ENCODE measurements at regions of chr3 and their contacts with region 1.

Region 1: GRCh38 chr3:194472290-194472920 is 14.4 kb downstream of the ATP13A3 start:
- DNase-seq: no peak
- H3K4me3 ChIP-seq: no peak overlapping the region
- H3K27ac ChIP-seq: no peak overlapping the region
- H3K4me1 ChIP-seq: peaks cover 0 to 5% (median 1%) of the 10 kb centered on the region in 4 experiments; a peak in 3 of 7 replicates
- H3K27me3 ChIP-seq: no peaks in the 10 kb centered on the region
- CTCF ChIP-seq: peak in 2 of 3 experiments; percentile 65 to 89; a peak in 2 of 4 replicates
- EP300 ChIP-seq: no peak
- POLR2A ChIP-seq: no peak
- RAD21 ChIP-seq: peak; percentile 84 to 85

Region 2: GRCh38 chr3:194447161-194447560 is 25.2 kb before region 1 on chr3:
- CTCF ChIA-PET with region 1: interaction called, 13 read pairs
- POLR2A ChIA-PET with region 1: no interaction called
- DNase-seq: no peak
- H3K4me3 ChIP-seq: no peak overlapping the region
- H3K27ac ChIP-seq: no peak overlapping the region
- H3K4me1 ChIP-seq: no peaks in the 10 kb centered on the region
- H3K27me3 ChIP-seq: peaks cover 0 to 2% (median 0%) of the 10 kb centered on the region in 4 experiments; a peak in 1 of 7 replicates
- CTCF ChIP-seq: no peak
- EP300 ChIP-seq: no peak
- POLR2A ChIP-seq: no peak
- RAD21 ChIP-seq: no peak

Region 3: GRCh38 chr3:194486540-194487288 is 14.3 kb after region 1 on chr3 and contains the start of gene ATP13A3:
- CTCF ChIA-PET with region 1: interaction called, 50 read pairs
- POLR2A ChIA-PET with region 1: interaction called, 11 read pairs
- DNase-seq: peak; percentile 70 to 79
- H3K4me3 ChIP-seq: peak within 1 kb of the TSS; percentile 75 to 92 (median 84)
- H3K27ac ChIP-seq: no peak within 1 kb of the TSS; the same call in 1 of the 2 replicates
- H3K4me1 ChIP-seq: peaks cover 0 to 2% (median 0%) of the 10 kb centered on the region in 4 experiments; a peak in 2 of 7 replicates
- H3K27me3 ChIP-seq: peaks cover 0 to 6% (median 4%) of the 10 kb centered on the region in 4 experiments; a peak in 1 of 7 replicates
- CTCF ChIP-seq: no peak
- EP300 ChIP-seq: no peak
- POLR2A ChIP-seq: peak; percentile 86 to 88
- RAD21 ChIP-seq: no peak
- total RNA-seq, gene ATP13A3: 84.2 and 92.2 TPM in 2 replicates

Region 4: DNA sequence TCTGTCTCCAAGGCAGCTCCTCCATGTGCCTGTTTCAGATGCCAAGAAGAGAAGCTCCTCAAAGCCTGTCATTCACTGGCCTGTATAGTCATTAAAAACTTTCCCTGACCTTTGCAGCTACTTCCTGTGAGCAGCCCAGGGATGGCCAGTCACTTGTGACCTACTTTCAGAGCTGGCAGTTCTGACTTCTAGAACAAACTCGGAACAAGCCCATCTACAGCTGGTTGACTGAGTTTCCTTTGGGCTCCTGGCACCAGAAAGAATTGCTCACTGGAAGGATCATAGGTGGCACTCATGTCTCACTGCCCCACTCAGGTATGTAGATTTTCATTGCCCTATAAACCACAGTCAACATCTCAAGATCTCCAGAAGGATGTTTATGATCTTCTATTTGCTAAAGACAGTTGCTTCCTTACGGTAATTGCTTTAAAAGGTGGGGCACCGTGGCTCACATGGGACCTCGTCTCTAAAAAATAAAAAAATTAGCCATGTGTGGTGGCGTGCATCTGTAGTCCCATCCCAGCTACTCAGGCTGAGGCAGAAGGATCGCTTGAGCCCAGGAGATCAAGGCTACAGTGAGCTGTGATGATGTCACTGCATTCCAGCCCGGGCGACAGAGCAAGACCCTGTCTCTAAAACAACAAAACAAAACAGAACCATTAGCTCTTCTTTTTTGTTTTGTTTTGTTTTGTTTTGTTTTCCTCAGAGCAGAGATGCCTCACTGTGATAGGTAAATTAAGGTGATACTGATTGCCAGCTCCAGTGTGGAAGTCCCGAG is 25.6 kb after region 1 on chr3:
- CTCF ChIA-PET with region 1: interaction called, 13 read pairs
- POLR2A ChIA-PET with region 1: interaction called, 3 read pairs
- DNase-seq: no peak
- H3K4me3 ChIP-seq: no peak overlapping the region
- H3K27ac ChIP-seq: no peak overlapping the region
- H3K4me1 ChIP-seq: no peaks in the 10 kb centered on the region
- H3K27me3 ChIP-seq: no peaks in the 10 kb centered on the region
- CTCF ChIP-seq: no peak
- EP300 ChIP-seq: no peak
- POLR2A ChIP-seq: no peak
- RAD21 ChIP-seq: no peak

Region 5: DNA sequence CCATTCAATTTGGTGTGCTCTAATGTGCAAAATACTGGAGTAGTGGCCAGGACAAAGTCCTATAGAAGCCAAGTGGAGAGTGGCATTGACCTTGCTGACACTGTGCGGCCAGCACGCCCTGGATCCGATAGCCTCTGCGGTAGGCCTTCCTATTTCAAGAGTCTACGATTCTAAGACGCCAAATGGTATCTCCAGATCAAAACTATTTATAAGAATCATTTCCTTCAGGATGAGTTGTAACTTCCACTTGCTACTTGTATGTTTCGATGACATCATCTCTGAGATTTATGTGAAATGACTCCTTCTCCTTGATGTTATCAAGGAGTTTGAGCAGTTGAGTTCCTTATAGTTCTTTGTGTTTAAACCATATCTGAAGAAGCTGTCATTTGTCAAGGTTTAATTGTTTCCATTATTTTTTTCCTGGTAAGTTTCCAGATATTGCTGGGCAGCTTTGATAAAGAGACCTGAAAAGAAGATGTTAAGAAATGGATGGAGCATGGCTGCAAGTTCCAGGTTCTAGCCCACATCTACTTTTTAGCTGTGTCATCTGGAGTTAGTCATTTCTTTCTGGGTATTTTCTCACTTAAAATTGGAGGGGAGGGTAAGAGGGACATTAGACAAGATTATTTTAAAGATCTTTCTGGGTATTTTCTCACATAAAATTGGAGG is 89.0 kb after region 1 on chr3:
- CTCF ChIA-PET with region 1: interaction called, 10 read pairs
- POLR2A ChIA-PET with region 1: no interaction called
- DNase-seq: no peak
- H3K4me3 ChIP-seq: no peak overlapping the region
- H3K27ac ChIP-seq: no peak overlapping the region
- H3K4me1 ChIP-seq: peaks cover 0 to 5% (median 2%) of the 10 kb centered on the region in 4 experiments; a peak in 4 of 7 replicates
- H3K27me3 ChIP-seq: peaks cover 0 to 3% (median 0%) of the 10 kb centered on the region in 4 experiments; a peak in 1 of 7 replicates
- CTCF ChIP-seq: no peak
- EP300 ChIP-seq: no peak
- POLR2A ChIP-seq: no peak
- RAD21 ChIP-seq: no peak

Region 6: DNA sequence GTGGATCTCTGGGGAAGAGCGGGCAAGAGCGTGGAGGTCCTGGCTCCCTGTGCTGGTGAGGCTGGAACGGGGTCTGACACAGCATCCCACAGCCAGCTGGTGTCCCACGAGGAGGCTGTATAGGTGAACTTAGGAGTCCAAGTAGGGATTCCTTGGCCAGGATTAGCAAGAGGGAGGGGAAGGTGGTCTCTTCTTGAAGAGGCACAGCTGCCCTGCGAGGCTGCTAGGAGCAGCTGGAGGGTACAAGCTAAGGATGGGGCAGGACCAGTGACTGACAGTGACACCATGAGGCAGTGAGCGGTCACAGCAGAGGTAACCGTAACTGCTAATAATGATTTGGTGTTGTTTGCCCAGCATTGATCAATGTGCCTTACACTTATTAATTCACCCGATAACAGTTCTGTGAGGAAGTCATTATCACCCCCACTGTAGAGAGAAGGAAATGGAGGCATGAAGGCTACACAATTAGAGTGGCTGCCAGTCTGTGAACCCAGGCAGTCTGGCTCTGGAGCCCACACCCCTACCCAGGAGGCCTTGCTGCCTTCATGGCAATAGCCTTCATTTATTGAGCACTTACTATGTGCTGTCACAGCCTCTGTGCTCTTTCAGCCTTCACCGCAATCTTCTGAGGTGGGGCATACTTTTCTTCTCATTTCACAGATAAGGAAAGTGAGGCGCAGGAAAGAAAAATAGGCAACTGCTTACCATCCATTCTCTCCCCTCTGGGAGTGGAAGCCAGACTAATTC is 101.5 kb after region 1 on chr3:
- CTCF ChIA-PET with region 1: interaction called, 48 read pairs
- POLR2A ChIA-PET with region 1: interaction called, 3 read pairs
- DNase-seq: peak in 1 of 2 experiments; percentile 48
- H3K4me3 ChIP-seq: no peak overlapping the region
- H3K27ac ChIP-seq: no peak overlapping the region
- H3K4me1 ChIP-seq: no peaks in the 10 kb centered on the region
- H3K27me3 ChIP-seq: no peaks in the 10 kb centered on the region
- CTCF ChIP-seq: peak; percentile 62 to 89 (median 88)
- EP300 ChIP-seq: no peak
- POLR2A ChIP-seq: no peak
- RAD21 ChIP-seq: peak; percentile 83 to 85

Region 7: GRCh38 chr3:194592798-194593752 is 120.7 kb after region 1 on chr3:
- CTCF ChIA-PET with region 1: interaction called, 12 read pairs
- POLR2A ChIA-PET with region 1: no interaction called
- DNase-seq: no peak
- H3K4me3 ChIP-seq: no peak overlapping the region
- H3K27ac ChIP-seq: no peak overlapping the region
- H3K4me1 ChIP-seq: no peaks in the 10 kb centered on the region
- H3K27me3 ChIP-seq: no peaks in the 10 kb centered on the region
- CTCF ChIP-seq: no peak
- EP300 ChIP-seq: no peak
- POLR2A ChIP-seq: no peak
- RAD21 ChIP-seq: no peak

Measured in H1 (cell line).